ENCODE measurements at regions of chr1 and their contacts with region 1.

Region 1: GRCh38 chr1:243255791-243256512 is at the start of gene SDCCAG8:
- DNase-seq: peak; percentile 93 to 97 (median 94)
- H3K4me3 ChIP-seq: peak within 1 kb of the TSS; percentile 85 to 92
- H3K4me3 Mint-ChIP-seq: peak within 1 kb of the TSS; percentile 96 to 100 (median 100)
- H3K27ac ChIP-seq: peak within 1 kb of the TSS; percentile 87
- H3K27ac Mint-ChIP-seq: peak within 1 kb of the TSS; percentile 99 to 100 (median 100)
- H3K4me1 ChIP-seq: peaks cover 25% of the 10 kb centered on the region
- H3K4me1 Mint-ChIP-seq: peaks cover 27 to 51% (median 37%) of the 10 kb centered on the region in 4 donors
- H3K27me3 ChIP-seq: no peaks in the 10 kb centered on the region
- H3K27me3 Mint-ChIP-seq: peaks cover 0 to 2% of the 10 kb centered on the region in 2 donors
- total RNA-seq, gene SDCCAG8: 32.8 to 35.7 TPM

Region 2: DNA sequence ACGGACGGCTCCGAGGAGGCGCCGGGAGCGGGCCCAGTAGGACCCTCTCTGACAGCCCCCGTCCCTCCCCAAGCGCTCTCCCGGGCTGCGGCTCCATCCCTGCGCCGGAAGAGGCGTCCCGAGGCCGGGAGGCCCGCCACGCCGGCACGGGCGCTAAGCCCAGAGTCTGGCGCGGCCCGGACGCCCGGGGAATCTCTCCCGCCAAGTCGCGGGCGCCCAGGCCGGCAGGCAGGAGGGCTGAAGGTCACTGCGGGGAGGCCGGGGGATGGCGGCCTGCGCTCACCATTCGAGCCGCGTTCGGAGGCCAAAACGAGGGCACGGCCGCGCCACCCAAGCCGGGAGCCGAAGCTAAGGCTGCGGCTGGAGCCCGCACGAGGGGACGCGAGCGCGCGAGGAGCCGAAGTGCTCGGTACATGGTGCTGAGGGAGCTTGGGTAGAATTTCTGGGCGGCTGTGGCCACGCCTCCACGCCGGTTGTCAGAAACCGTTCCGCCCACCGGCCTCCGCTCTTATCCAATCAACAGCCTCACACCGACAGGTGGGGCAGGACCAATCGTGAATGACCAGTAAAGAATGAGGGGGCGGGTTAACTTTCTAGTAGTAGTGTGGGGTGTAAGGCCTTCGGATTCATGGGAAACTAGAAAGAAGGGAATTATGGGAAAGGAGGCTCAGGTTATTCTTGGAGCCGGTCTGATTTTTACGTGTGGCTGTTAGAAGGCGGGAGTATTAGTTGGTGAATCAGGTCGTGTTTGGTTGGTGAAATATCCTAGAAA is 1736.5 kb before region 1 on chr1 and contains the start of gene FH:
- CTCF ChIA-PET with region 1: no interaction called
- POLR2A ChIA-PET with region 1: no interaction called
- intact Hi-C with region 1: loop called (anchors 1 kb)
- DNase-seq: peak; percentile 92 to 95 (median 94)
- H3K4me3 ChIP-seq: peak within 1 kb of the TSS; percentile 75 to 76
- H3K4me3 Mint-ChIP-seq: peak within 1 kb of the TSS in 7 of 8 donors; percentile 84 to 93 (median 90)
- H3K27ac ChIP-seq: peak within 1 kb of the TSS; percentile 57
- H3K27ac Mint-ChIP-seq: peak within 1 kb of the TSS; percentile 54 to 95 (median 90)
- H3K4me1 ChIP-seq: peaks cover 17% of the 10 kb centered on the region
- H3K4me1 Mint-ChIP-seq: peaks cover 11 to 32% (median 22%) of the 10 kb centered on the region in 4 donors
- H3K27me3 ChIP-seq: peaks cover 8% of the 10 kb centered on the region
- H3K27me3 Mint-ChIP-seq: peaks cover 16 to 17% of the 10 kb centered on the region in 2 donors
- total RNA-seq, gene FH: 21.0 to 25.9 TPM

Region 3: DNA sequence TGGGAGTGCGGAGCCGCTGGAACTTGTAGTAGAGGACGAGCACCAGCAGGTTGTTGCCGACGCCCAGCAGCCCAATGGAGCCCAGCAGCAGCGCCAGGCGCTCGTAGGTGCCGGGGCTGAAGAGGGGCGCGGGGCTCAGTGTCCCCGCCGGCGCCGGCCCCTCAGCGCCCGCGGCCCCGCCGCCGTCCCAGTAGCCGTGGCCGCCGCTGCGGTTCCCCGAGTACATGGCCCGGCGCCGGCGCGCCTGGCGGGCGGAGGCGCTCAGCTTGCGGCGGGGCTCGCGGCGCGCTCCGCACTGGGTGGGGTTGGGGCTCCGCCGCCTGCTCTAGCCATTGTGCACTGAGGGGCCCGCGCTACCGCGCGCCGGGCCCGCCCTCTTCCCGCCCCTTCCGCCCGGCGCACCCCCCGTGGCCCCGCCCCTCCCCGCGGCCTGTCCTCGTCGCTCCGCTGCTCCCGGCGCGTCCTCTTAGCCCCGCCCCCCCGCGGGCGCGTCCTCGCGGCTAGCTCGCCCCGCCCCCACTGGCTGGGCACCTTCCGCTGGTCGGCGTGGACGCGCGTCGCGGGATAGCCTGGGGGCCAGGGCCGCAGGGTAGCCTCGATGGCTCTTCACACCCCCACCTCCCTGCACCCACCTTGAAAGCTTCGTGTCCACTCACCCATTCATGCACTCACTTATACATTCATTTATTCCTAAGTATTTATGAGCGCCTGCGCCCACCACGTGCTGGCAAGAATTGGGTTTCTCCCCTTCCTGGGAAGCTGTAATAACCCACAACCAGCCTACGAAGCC is 1615.7 kb before region 1 on chr1 and contains the starts of genes CHML and OPN3:
- CTCF ChIA-PET with region 1: no interaction called
- POLR2A ChIA-PET with region 1: interaction called, 10 read pairs
- intact Hi-C with region 1: loop called (anchors 2 kb)
- DNase-seq: peak; percentile 83 to 87 (median 84)
- H3K4me3 ChIP-seq: peak within 1 kb of the TSS; percentile 64 to 82
- H3K4me3 Mint-ChIP-seq: peak within 1 kb of the TSS; percentile 81 to 89 (median 86)
- H3K27ac ChIP-seq: peak within 1 kb of the TSS; percentile 41
- H3K27ac Mint-ChIP-seq: peak within 1 kb of the TSS; percentile 60 to 96 (median 85)
- H3K4me1 ChIP-seq: peaks cover 25% of the 10 kb centered on the region
- H3K4me1 Mint-ChIP-seq: peaks cover 18 to 40% (median 25%) of the 10 kb centered on the region in 4 donors
- H3K27me3 ChIP-seq: no peaks in the 10 kb centered on the region
- H3K27me3 Mint-ChIP-seq: no peaks in the 10 kb centered on the region
- total RNA-seq, gene CHML: 7.5 to 8.8 TPM
- total RNA-seq, gene OPN3: 3.9 to 4.8 TPM

Region 4: GRCh38 chr1:243271996-243272395 is 16.0 kb after region 1 on chr1:
- CTCF ChIA-PET with region 1: no interaction called
- POLR2A ChIA-PET with region 1: interaction called, 11 read pairs
- intact Hi-C with region 1: no loop called
- DNase-seq: no peak
- H3K4me3 ChIP-seq: no peak overlapping the region
- H3K4me3 Mint-ChIP-seq: no peak overlapping the region
- H3K27ac ChIP-seq: no peak overlapping the region
- H3K27ac Mint-ChIP-seq: peak overlapping the region in 1 of 7 donors; percentile 17
- H3K4me1 ChIP-seq: no peaks in the 10 kb centered on the region
- H3K4me1 Mint-ChIP-seq: peaks cover 0 to 9% (median 8%) of the 10 kb centered on the region in 4 donors
- H3K27me3 ChIP-seq: no peaks in the 10 kb centered on the region
- H3K27me3 Mint-ChIP-seq: no peaks in the 10 kb centered on the region

Region 5: GRCh38 chr1:243525085-243525487 is 269.1 kb after region 1 on chr1:
- CTCF ChIA-PET with region 1: no interaction called
- POLR2A ChIA-PET with region 1: no interaction called
- intact Hi-C with region 1: no loop called
- DNase-seq: no peak
- H3K4me3 ChIP-seq: no peak overlapping the region
- H3K4me3 Mint-ChIP-seq: no peak overlapping the region
- H3K27ac ChIP-seq: no peak overlapping the region
- H3K27ac Mint-ChIP-seq: peak overlapping the region in 2 of 7 donors; percentile 14
- H3K4me1 ChIP-seq: no peaks in the 10 kb centered on the region
- H3K4me1 Mint-ChIP-seq: peaks cover 0 to 22% (median 6%) of the 10 kb centered on the region in 4 donors
- H3K27me3 ChIP-seq: no peaks in the 10 kb centered on the region
- H3K27me3 Mint-ChIP-seq: no peaks in the 10 kb centered on the region

Region 6: DNA sequence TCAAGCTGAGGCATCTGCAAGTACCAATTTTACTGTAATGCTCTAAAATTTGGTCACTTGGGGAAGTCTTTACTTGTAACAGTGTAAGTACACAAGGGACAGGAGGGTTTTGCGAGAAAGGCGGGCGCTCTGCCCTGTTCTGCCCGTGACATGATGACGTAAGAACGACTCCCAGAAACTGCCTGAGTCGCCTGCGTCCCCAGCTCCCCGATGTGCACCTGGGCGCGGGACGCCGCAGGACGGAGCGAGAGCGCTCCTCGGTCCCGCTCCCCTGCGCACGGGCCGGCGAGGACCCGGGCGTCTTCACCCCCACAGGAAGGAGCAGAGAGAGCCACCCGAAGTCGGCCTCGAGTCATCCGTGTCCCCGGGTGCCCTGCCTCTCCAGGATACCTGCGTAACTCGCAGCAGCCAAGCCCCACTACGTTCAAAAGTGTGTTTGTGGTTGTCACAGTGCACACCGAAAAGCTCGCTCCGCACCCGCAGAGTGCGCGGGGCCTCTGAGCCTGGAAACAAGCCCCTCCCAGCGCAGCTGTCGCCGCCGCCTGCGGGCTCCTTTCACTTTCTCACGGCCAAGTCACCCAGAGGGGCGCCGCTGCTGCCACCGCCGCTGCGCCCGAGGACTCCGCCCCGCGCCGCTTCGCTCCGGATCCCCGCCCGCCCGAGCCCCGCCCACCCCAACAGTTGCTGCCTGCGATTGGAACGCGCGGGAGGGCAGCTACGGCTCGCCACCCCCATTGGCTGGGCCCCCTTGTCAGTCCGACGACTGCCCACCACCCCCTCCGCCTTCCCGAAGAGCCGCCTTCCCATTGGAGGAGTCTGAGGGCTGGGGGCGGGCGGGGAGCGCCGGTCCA is 791.9 kb after region 1 on chr1:
- CTCF ChIA-PET with region 1: interaction called, 3 read pairs
- POLR2A ChIA-PET with region 1: interaction called, 15 read pairs
- intact Hi-C with region 1: loop called (anchors 1 kb)
- DNase-seq: peak; percentile 93 to 99 (median 97)
- H3K4me3 ChIP-seq: peak overlapping the region; percentile 77 to 99
- H3K4me3 Mint-ChIP-seq: peak overlapping the region; percentile 84 to 98 (median 95)
- H3K27ac ChIP-seq: peak overlapping the region; percentile 94
- H3K27ac Mint-ChIP-seq: peak overlapping the region; percentile 91 to 100 (median 98)
- H3K4me1 ChIP-seq: peaks cover 47% of the 10 kb centered on the region
- H3K4me1 Mint-ChIP-seq: peaks cover 21 to 28% (median 27%) of the 10 kb centered on the region in 4 donors
- H3K27me3 ChIP-seq: no peaks in the 10 kb centered on the region
- H3K27me3 Mint-ChIP-seq: peaks cover 0 to 2% of the 10 kb centered on the region in 2 donors

Region 7: GRCh38 chr1:244451951-244452795 is 1196.2 kb after region 1 on chr1:
- CTCF ChIA-PET with region 1: no interaction called
- POLR2A ChIA-PET with region 1: interaction called, 9 read pairs
- intact Hi-C with region 1: loop called (anchors 1 kb)
- DNase-seq: peak; percentile 98 to 99 (median 99)
- H3K4me3 ChIP-seq: peak overlapping the region in 1 of 2 donors; percentile 95
- H3K4me3 Mint-ChIP-seq: peak overlapping the region; percentile 87 to 97 (median 92)
- H3K27ac ChIP-seq: peak overlapping the region; percentile 94
- H3K27ac Mint-ChIP-seq: peak overlapping the region; percentile 87 to 100 (median 95)
- H3K4me1 ChIP-seq: peaks cover 39% of the 10 kb centered on the region
- H3K4me1 Mint-ChIP-seq: peaks cover 31 to 48% (median 35%) of the 10 kb centered on the region in 4 donors
- H3K27me3 ChIP-seq: no peaks in the 10 kb centered on the region
- H3K27me3 Mint-ChIP-seq: no peaks in the 10 kb centered on the region

Region 8: GRCh38 chr1:244652699-244653466 is 1396.9 kb after region 1 on chr1 and contains the start of gene DESI2:
- CTCF ChIA-PET with region 1: no interaction called
- POLR2A ChIA-PET with region 1: interaction called, 7 read pairs
- intact Hi-C with region 1: loop called (anchors 1 kb)
- DNase-seq: peak; percentile 97 to 100 (median 99)
- H3K4me3 ChIP-seq: peak within 1 kb of the TSS; percentile 61 to 73
- H3K4me3 Mint-ChIP-seq: peak within 1 kb of the TSS; percentile 80 to 91 (median 86)
- H3K27ac ChIP-seq: peak within 1 kb of the TSS; percentile 89
- H3K27ac Mint-ChIP-seq: peak within 1 kb of the TSS; percentile 43 to 95 (median 93)
- H3K4me1 ChIP-seq: peaks cover 43% of the 10 kb centered on the region
- H3K4me1 Mint-ChIP-seq: peaks cover 21 to 24% (median 22%) of the 10 kb centered on the region in 4 donors
- H3K27me3 ChIP-seq: no peaks in the 10 kb centered on the region
- H3K27me3 Mint-ChIP-seq: no peaks in the 10 kb centered on the region
- total RNA-seq, gene DESI2: 21.1 to 22.8 TPM